Activated naive CD4-positive, alpha-beta T cell treated with anti-CD3 and anti-CD28 coated beads for 36 hours (primary cell): ENCODE measurements at regions of chr2 and their contacts with region 1.

Region 1: GRCh38 chr2:159879051-159879604 is 81.1 kb upstream of the CD302 start:
- DNase-seq: peak; percentile 76
- H3K4me3 Mint-ChIP-seq: no peak overlapping the region
- H3K27ac Mint-ChIP-seq: peak overlapping the region; percentile 77
- H3K4me1 Mint-ChIP-seq: peaks cover 45% of the 10 kb centered on the region
- H3K27me3 Mint-ChIP-seq: no peaks in the 10 kb centered on the region

Region 2: DNA sequence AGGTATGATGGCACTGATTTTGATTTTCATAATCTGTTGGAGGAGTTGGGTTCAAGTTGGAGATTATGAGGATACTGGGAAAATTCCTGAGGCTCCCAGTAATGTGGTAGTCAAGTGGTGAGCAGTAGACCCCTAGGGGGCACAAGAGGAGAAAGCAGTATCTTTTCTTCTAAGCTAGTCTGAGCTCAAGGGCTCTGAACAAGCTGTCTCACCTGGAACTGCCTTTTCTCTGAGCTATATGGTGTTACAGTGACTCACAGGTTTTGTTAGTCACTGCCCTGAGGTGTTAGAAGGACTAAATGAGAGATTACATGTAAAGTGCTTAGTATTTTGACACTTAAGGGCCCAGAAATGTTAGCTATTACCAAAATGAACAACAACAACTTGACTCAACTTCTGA is 123.3 kb before region 1 on chr2:
- CTCF ChIA-PET with region 1: no interaction called
- intact Hi-C with region 1: loop called (anchors 1 kb)
- DNase-seq: peak; percentile 54
- H3K4me3 Mint-ChIP-seq: no peak overlapping the region
- H3K27ac Mint-ChIP-seq: no peak overlapping the region
- H3K4me1 Mint-ChIP-seq: peaks cover 22% of the 10 kb centered on the region
- H3K27me3 Mint-ChIP-seq: no peaks in the 10 kb centered on the region

Region 3: DNA sequence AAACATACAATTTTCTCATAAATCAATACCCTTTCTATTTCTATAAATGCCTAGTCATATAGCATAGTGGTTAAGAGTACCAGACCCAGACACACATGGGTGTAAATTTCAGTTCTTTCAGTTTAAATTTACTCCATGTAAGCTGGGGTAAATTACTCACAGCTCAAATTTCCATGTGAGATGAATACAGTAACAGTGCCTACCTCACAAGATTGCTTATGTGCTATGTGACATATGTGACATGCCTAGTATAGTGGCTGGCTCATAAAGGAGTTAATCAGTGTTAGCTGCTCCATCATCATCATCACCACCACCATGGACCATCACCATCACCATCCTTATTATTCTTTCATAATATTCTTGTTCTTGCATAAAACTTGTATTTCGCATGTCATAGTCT is 19.5 kb before region 1 on chr2:
- CTCF ChIA-PET with region 1: no interaction called
- intact Hi-C with region 1: loop called (anchors 1 kb)
- DNase-seq: no peak
- H3K4me3 Mint-ChIP-seq: no peak overlapping the region
- H3K27ac Mint-ChIP-seq: no peak overlapping the region
- H3K4me1 Mint-ChIP-seq: peaks cover 8% of the 10 kb centered on the region
- H3K27me3 Mint-ChIP-seq: no peaks in the 10 kb centered on the region

Region 4: GRCh38 chr2:159904127-159904958 is 25.2 kb after region 1 on chr2:
- CTCF ChIA-PET with region 1: no interaction called
- intact Hi-C with region 1: loop called (anchors 1 kb)
- DNase-seq: peak; percentile 82
- H3K4me3 Mint-ChIP-seq: peak within 1 kb of the TSS; percentile 93
- H3K27ac Mint-ChIP-seq: peak within 1 kb of the TSS; percentile 93
- H3K4me1 Mint-ChIP-seq: peaks cover 58% of the 10 kb centered on the region
- H3K27me3 Mint-ChIP-seq: no peaks in the 10 kb centered on the region